ENCODE measurements at regions of chr11 and their contacts with region 1.

Region 1: DNA sequence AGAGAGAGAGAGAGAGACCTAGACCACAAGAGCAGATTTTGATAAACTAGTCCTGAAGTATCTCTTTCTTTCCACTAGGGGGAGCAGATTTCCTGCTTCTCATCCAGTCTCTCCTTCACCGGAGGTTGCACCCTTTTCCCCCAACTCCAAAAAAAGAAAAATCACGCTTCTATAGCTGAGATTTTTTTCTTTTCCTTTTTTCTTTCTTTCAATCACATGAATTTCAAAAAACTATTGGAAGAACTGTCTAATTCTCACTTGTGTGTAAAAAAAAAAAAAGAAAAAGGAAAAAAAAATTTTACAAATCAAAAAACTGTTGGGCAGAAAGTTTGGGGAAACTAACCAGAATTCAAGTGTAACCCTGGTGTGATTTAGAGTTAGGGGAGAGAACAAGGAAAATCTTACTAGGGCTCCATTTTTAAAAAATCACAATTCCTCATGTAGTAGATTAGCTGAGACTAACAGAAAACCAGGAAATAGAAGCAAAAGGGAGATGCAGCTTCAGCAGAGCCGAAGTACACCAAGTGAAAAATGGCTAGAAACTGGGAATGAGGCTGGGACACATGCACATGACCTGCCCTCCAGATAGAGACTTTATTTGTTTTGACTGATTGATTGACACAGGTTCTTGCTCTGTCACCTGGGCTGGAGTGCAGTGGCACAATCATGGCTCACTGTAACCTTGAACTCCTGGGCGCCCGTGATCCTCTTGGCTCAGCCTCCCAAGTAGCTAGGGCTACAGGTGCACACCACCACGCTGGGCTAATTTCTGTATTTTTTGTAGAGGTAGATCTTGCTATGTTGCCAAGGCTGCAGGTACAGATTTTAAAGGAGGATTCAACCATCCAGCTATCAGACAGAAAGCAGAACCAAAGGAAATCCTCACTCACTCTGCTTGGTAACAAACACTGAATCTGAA is 27.1 kb downstream of the SDHD start:
- DNase-seq: no peak
- H3K4me3 ChIP-seq: no peak overlapping the region
- CTCF ChIP-seq: peak; percentile 62

Region 2: DNA sequence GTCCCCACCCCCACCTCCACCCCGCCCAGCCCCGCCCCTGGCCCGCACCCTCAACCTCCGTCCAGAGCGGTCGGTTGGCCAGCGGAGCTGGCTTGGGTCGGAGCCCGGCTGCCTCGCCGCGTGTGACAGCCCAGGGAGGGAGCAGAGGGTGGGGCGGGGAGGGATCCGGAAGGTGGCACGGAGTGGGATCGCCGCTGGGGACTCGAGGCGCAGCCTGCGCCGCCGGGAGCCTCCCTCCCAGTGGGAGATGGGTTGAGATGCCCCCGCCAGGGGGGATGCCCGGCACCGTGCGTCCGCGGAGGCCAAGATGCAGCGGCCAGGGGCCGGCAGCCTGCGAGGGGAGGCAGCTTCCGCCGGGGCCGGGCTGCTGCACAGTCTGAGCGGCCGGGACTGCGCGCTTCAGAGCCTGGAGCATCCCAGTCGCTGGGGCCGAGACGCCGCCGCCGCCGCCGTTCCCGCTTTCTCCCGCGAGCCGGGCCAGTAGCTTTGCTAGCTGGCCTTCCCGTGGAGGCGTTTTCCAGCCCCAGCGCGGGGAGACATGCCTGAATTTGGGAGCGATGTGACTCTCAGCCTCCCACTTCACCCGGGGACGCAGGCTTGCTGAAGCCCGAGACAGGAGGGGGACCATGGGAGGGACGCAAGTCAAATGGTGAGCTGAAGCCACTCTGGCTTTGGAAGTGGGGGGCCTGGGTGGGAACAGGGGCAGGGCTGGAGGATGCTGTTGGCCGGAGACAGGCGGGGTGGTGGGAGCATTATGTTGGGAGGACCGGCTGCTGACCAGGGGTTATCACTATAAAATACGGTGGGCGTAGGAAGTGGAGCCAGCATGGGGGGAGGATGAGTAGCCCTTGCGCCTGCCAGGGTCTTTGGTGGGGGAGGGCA is 136.4 kb before region 1 on chr11:
- CTCF ChIA-PET with region 1: no interaction called
- POLR2A ChIA-PET with region 1: no interaction called
- DNase-seq: no peak
- H3K4me3 ChIP-seq: peak overlapping the region; percentile 73
- CTCF ChIP-seq: no peak

Region 3: GRCh38 chr11:112051768-112052167 is 62.0 kb before region 1 on chr11:
- CTCF ChIA-PET with region 1: no interaction called
- POLR2A ChIA-PET with region 1: no interaction called
- DNase-seq: no peak
- H3K4me3 ChIP-seq: no peak overlapping the region
- CTCF ChIP-seq: no peak

Region 4: GRCh38 chr11:112100462-112100861 is 13.3 kb before region 1 on chr11:
- CTCF ChIA-PET with region 1: interaction called, 138 read pairs
- POLR2A ChIA-PET with region 1: no interaction called
- DNase-seq: no peak
- H3K4me3 ChIP-seq: no peak overlapping the region
- CTCF ChIP-seq: no peak

Region 5: GRCh38 chr11:112163875-112164685 is 50.3 kb after region 1 on chr11 and contains the start of gene IL18:
- CTCF ChIA-PET with region 1: interaction called, 20 read pairs
- POLR2A ChIA-PET with region 1: no interaction called
- DNase-seq: no peak
- H3K4me3 ChIP-seq: no peak within 1 kb of the TSS
- CTCF ChIP-seq: no peak

Region 6: DNA sequence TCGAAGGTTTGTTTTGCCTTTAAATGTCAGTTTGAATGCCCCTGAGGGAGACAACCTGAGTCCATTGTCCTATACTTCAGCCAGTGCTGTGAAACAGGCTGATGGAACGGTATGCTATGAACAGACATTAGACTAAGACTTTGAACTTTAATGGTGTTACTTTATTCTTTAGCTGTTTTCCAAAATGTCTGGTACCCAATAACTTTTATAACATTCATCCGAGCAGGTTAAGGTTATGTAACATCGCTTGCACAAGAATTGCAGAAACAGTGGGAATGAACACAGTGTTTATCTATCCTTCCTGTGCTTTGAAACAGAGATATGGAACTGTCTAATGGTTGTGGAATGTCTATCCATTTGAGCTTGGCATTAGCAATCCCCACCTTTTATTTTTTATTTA is 100.0 kb after region 1 on chr11:
- CTCF ChIA-PET with region 1: interaction called, 75 read pairs
- POLR2A ChIA-PET with region 1: no interaction called
- DNase-seq: no peak
- H3K4me3 ChIP-seq: no peak overlapping the region
- CTCF ChIP-seq: no peak

Region 7: DNA sequence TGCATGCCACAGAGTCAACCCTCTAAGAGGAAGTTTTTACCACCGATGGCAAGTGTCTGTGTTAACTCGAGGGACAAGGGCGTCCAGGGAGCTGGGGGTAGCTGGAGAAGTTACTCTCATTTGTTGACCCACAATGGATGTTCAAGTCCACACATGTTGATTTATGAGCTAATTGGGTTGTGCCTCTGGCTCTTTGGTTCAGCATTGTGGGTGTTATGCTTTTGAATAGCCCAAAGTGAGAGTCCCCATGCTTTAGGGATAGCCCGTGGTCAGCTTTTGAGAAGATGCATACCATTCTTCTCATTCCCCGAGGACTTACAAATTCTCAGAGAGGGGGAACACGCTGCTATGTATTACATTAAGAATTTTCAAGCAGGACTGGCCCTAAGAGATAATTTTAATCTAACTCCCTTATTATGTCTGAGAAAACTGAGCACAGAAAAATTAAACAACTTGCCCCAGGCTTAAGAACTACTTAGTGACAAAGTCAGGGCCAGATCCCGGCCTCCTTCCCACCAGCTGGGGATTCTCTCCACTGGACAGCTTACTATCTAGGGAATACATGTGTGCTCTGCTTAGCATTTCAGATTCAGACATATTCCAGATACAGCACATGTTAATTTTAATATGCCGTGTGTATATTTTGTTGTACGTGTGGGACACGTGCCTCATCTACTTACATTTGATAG is 152.1 kb after region 1 on chr11:
- CTCF ChIA-PET with region 1: interaction called, 11 read pairs
- POLR2A ChIA-PET with region 1: no interaction called
- DNase-seq: peak; percentile 42
- H3K4me3 ChIP-seq: no peak overlapping the region
- CTCF ChIP-seq: no peak

Region 8: GRCh38 chr11:113065330-113065729 is 951.5 kb after region 1 on chr11:
- CTCF ChIA-PET with region 1: no interaction called
- POLR2A ChIA-PET with region 1: no interaction called
- DNase-seq: no peak
- H3K4me3 ChIP-seq: no peak overlapping the region
- CTCF ChIP-seq: no peak